Activated B cell treated with CpG ODN at 0.5 μM for 24 hours (primary cell): ENCODE measurements at regions of chr15 and their contacts with region 1.

Region 1: GRCh38 chr15:78018946-78019644 is 58.4 kb downstream of the TBC1D2B start:
- DNase-seq: peak; percentile 32
- ATAC-seq: peak; percentile 99
- H3K4me3 Mint-ChIP-seq: peak overlapping the region; percentile 16
- H3K27ac Mint-ChIP-seq: peak overlapping the region; percentile 50
- H3K4me1 Mint-ChIP-seq: peaks cover 13% of the 10 kb centered on the region
- H3K27me3 Mint-ChIP-seq: no peaks in the 10 kb centered on the region
- CTCF ChIP-seq: no peak

Region 2: GRCh38 chr15:77983708-77984445 is 35.2 kb before region 1 on chr15:
- CTCF ChIA-PET with region 1: no interaction called
- POLR2A ChIA-PET with region 1: no interaction called
- intact Hi-C with region 1: no loop called
- DNase-seq: no peak
- ATAC-seq: no peak
- H3K4me3 Mint-ChIP-seq: no peak overlapping the region
- H3K27ac Mint-ChIP-seq: no peak overlapping the region
- H3K4me1 Mint-ChIP-seq: peaks cover under 1% of the 10 kb centered on the region
- H3K27me3 Mint-ChIP-seq: peaks cover 10% of the 10 kb centered on the region
- CTCF ChIP-seq: no peak

Region 3: GRCh38 chr15:78049691-78050440 is 30.8 kb after region 1 on chr15:
- CTCF ChIA-PET with region 1: interaction called, 3 read pairs
- POLR2A ChIA-PET with region 1: no interaction called
- intact Hi-C with region 1: loop called (anchors 5 kb)
- DNase-seq: no peak
- ATAC-seq: peak; percentile 60
- H3K4me3 Mint-ChIP-seq: peak overlapping the region; percentile 24
- H3K27ac Mint-ChIP-seq: peak overlapping the region; percentile 28
- H3K4me1 Mint-ChIP-seq: peaks cover 51% of the 10 kb centered on the region
- H3K27me3 Mint-ChIP-seq: no peaks in the 10 kb centered on the region
- CTCF ChIP-seq: no peak

Region 4: DNA sequence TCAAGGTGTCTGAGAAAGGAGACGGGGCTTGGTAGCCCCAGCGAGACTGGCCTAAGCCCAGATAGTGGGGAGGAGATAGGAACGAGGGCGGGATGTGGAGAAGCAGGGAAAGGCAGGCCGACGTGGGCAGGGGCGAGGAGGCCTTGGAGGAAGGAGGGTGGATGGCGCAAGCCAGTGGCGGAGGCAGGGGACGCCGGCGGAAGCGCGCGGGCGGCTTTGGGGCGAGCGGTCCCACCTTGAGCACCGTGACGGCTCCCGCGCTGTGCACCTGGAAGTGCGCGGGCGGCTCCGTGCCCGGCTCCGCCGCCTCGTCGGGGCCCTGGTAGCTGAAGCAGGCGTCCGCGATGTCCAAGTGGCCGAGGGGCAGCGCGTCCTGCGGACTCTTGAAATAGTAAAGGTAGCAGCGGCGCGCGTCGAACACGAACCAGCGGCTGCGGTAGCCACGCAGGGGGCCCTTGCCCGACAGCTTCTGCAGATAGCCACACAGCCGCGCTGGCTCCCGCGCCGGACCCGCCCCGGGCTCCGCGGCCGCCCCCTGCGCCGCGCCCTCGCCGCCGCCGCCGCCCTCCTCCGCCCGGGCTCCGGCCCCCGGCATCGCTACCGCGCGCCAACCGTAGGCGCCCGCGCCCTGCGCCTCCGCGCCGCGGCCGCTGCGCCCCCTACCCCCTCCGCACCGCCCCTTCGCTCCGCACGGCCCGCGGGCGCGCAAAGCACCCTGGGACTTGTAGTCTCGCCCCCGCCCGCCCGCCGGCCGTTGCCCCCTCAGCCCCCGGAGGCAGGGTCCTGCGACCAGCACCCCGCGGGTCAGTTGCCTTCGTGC is 58.2 kb after region 1 on chr15 and contains the start of gene TBC1D2B:
- CTCF ChIA-PET with region 1: no interaction called
- POLR2A ChIA-PET with region 1: no interaction called
- intact Hi-C with region 1: loop called (anchors 5 kb)
- DNase-seq: peak; percentile 68
- ATAC-seq: peak; percentile 91
- H3K4me3 Mint-ChIP-seq: peak within 1 kb of the TSS; percentile 92
- H3K27ac Mint-ChIP-seq: peak within 1 kb of the TSS; percentile 68
- H3K4me1 Mint-ChIP-seq: peaks cover 27% of the 10 kb centered on the region
- H3K27me3 Mint-ChIP-seq: no peaks in the 10 kb centered on the region
- CTCF ChIP-seq: no peak
- total RNA-seq, gene TBC1D2B: 12.9 and 13.7 TPM in 2 replicates